ENCODE measurements at regions of chr3 and their contacts with region 1.

Region 1: GRCh38 chr3:153111016-153111415 is 51.0 kb upstream of the RAP2B start:
- DNase-seq: no peak
- H3K4me3 ChIP-seq: no peak overlapping the region
- H3K27me3 ChIP-seq: no peaks in the 10 kb centered on the region
- CTCF ChIP-seq: no peak

Region 2: GRCh38 chr3:153313302-153313965 is 202.4 kb after region 1 on chr3:
- CTCF ChIA-PET with region 1: no interaction called
- POLR2A ChIA-PET with region 1: interaction called, 18 read pairs
- DNase-seq: no peak
- H3K4me3 ChIP-seq: peak overlapping the region; percentile 29
- H3K27me3 ChIP-seq: no peaks in the 10 kb centered on the region
- CTCF ChIP-seq: no peak